Adrenal gland (tissue), 19 donors: ENCODE measurements at regions of chr5 and their contacts with region 1.

Region 1: DNA sequence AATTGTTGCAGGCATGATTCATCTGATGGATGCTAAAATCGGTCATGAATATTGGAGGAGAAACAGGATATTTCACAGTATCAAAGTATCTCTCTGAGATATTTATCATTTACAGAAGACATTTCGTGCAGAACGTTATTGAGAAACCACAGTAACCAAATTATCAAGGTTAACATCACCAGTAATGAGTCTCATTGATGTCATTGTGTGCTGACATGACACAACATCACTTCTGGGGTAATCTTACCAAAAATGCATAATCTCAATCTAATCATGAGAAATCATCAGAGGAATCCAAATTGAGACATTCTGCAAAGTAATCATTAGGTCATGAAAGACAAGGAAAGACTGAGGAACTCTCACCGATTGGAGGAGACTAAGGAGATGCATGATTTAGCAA is 42.7 kb downstream of the C5orf22 start:
- DNase-seq: no peak
- H3K4me3 ChIP-seq: no peak overlapping the region
- H3K27ac ChIP-seq: no peak overlapping the region
- H3K4me1 ChIP-seq: no peaks in the 10 kb centered on the region
- H3K27me3 ChIP-seq: no peaks in the 10 kb centered on the region
- CTCF ChIP-seq: no peak
- POLR2A ChIP-seq: no peak

Region 2: GRCh38 chr5:31408814-31409213 is 166.0 kb before region 1 on chr5:
- intact Hi-C with region 1: no loop called
- DNase-seq: no peak
- H3K4me3 ChIP-seq: no peak overlapping the region
- H3K27ac ChIP-seq: no peak overlapping the region
- H3K4me1 ChIP-seq: peaks cover 10 to 19% of the 10 kb centered on the region in 2 donors
- H3K27me3 ChIP-seq: no peaks in the 10 kb centered on the region
- CTCF ChIP-seq: no peak
- POLR2A ChIP-seq: no peak

Region 3: DNA sequence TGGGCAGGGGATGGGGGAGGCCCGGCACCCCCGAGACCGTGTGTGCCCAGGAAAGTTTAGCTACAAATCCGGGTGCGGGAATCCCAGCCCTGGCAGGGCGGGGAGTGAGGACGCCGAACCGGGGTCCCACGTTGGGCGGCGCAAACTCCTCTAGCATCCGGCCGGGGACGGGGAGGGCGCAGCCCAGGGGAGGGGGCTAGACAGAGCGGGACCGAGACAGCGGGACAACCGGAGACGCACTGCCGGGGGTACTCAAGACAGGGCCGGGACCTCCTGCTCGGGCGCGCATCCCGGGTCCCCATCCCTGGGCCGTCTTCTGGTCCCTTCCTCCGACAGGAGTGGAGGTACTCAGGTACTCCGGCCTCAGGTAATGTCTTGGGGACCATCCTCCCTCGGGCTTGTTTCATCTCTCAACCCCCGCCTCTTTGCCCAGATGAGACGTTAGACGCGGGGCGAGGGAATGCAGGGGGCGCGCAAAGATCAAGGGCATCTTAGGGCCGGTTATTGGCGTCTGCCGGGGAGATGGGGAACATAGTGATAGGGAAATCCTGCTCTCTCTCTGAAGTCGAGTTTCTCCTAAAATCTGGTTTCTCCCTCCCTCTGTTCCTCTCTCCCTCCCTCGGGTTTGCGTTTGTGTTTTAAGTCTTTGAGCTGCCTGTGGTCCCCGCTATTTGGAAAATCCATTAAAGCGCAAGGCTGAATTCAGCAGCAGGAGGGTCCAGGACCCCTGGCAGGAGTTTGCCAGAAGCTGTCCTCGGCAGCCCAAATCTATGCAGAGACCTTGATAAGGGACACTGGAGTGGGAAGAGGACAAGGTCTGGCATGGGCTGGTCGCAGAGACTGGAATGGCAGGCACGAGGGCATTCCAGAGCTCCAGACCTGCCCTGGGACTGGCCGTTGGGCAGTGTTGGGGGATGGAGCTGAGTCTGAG is 65.0 kb after region 1 on chr5:
- intact Hi-C with region 1: loop called in 1 of 2 experiments (anchors 5 kb)
- DNase-seq: peak in 2 of 7 donors; percentile 23 to 36
- H3K4me3 ChIP-seq: peak overlapping the region in 2 of 4 donors; percentile 50 to 88
- H3K27ac ChIP-seq: no peak overlapping the region
- H3K4me1 ChIP-seq: peaks cover 12 to 38% of the 10 kb centered on the region in 2 donors
- H3K27me3 ChIP-seq: no peaks in the 10 kb centered on the region
- CTCF ChIP-seq: no peak
- POLR2A ChIP-seq: no peak